Right lobe of liver (tissue), 6 donors: ENCODE measurements at regions of chr3 and their contacts with region 1.

Region 1: GRCh38 chr3:52742418-52743041 is 28.2 kb downstream of the NEK4 start:
- DNase-seq: no peak
- ATAC-seq: peak; percentile 81 to 86 (median 82)
- H3K4me3 ChIP-seq: no peak overlapping the region
- H3K27ac ChIP-seq: no peak overlapping the region
- H3K4me1 ChIP-seq: peaks cover 0 to 12% (median 5%) of the 10 kb centered on the region in 4 donors
- H3K27me3 ChIP-seq: no peaks in the 10 kb centered on the region
- CTCF ChIP-seq: peak; percentile 64 to 70 (median 68)
- POLR2A ChIP-seq: no peak

Region 2: DNA sequence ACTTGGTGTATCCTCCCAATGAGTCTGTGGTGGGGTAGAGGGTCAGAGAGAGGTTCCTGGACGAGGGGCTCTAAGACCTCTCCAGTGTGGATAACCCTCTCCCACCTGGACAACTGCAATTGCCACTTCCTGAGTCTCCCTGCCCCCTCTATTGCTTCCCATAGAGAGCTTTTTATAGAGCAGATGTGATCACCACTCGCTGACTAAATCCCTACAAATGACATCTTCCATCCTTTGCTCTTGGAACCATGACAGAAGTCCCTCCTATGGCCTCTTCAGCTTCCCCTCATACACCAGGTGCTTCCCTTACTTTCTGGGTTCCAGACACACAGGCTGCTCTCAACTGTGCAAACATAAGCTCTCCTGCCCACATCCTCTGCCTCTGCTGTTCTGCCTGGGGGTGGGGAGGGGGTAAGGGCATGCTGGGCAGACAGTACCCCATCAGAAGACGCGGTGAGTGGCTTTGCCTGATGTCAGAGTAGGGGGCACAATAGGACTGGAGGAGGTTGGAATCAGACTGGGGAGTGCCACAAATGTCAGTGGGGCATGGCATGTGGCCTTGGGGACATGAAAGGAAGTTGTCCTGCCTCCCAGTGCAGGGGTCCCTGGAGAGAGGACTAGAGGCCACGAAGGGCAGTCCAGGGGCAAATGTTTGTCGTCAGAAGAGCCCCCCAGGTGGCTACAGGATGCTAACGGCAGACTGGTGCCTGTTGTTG is 67.3 kb after region 1 on chr3:
- intact Hi-C with region 1: loop called in 1 of 2 experiments (anchors 10 kb)
- DNase-seq: no peak
- ATAC-seq: peak in 2 of 4 donors; percentile 0 to 1
- H3K4me3 ChIP-seq: no peak overlapping the region
- H3K27ac ChIP-seq: no peak overlapping the region
- H3K4me1 ChIP-seq: peaks cover 0 to 35% (median 13%) of the 10 kb centered on the region in 4 donors
- H3K27me3 ChIP-seq: no peaks in the 10 kb centered on the region
- CTCF ChIP-seq: peak in 1 of 4 donors; percentile 2
- POLR2A ChIP-seq: peak; percentile 41

Region 3: DNA sequence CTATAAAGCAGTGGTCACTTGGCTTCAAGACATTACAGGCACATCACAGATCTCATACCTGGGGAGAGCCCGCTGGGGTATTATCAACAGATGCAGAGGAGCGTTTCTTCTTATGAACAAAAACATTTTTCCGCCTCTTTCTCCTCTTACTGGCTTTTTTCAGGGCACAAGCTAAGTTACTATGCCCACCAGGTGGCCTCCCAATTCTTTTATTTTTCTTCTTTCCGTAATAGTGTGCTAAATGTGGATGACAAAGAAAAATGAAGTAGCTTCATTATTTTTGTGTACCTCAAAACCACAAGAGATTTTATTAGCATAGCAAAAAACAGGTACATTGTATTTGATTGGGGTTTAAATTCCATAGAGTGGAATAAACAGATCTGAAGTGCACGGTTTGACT is 165.0 kb after region 1 on chr3:
- intact Hi-C with region 1: no loop called
- DNase-seq: no peak
- ATAC-seq: no peak
- H3K4me3 ChIP-seq: no peak overlapping the region
- H3K27ac ChIP-seq: no peak overlapping the region
- H3K4me1 ChIP-seq: peaks cover 0 to 14% (median 4%) of the 10 kb centered on the region in 4 donors
- H3K27me3 ChIP-seq: no peaks in the 10 kb centered on the region
- CTCF ChIP-seq: no peak
- POLR2A ChIP-seq: no peak